ENCODE measurements at regions of chr15 and their contacts with region 1.

Region 1: GRCh38 chr15:72155635-72156616 is 37.7 kb downstream of the SENP8 start:
- DNase-seq: peak; percentile 83
- H3K4me3 ChIP-seq: peak overlapping the region; percentile 35
- H3K27ac ChIP-seq: no peak overlapping the region
- H3K4me1 ChIP-seq: peaks cover 6% of the 10 kb centered on the region
- CTCF ChIP-seq: peak; percentile 98

Region 2: GRCh38 chr15:71743861-71744382 is 412.0 kb before region 1 on chr15:
- CTCF ChIA-PET with region 1: no interaction called
- POLR2A ChIA-PET with region 1: no interaction called
- intact Hi-C with region 1: loop called (anchors 1 kb)
- DNase-seq: peak; percentile 71
- H3K4me3 ChIP-seq: no peak overlapping the region
- H3K27ac ChIP-seq: no peak overlapping the region
- H3K4me1 ChIP-seq: no peaks in the 10 kb centered on the region
- CTCF ChIP-seq: peak; percentile 88

Region 3: DNA sequence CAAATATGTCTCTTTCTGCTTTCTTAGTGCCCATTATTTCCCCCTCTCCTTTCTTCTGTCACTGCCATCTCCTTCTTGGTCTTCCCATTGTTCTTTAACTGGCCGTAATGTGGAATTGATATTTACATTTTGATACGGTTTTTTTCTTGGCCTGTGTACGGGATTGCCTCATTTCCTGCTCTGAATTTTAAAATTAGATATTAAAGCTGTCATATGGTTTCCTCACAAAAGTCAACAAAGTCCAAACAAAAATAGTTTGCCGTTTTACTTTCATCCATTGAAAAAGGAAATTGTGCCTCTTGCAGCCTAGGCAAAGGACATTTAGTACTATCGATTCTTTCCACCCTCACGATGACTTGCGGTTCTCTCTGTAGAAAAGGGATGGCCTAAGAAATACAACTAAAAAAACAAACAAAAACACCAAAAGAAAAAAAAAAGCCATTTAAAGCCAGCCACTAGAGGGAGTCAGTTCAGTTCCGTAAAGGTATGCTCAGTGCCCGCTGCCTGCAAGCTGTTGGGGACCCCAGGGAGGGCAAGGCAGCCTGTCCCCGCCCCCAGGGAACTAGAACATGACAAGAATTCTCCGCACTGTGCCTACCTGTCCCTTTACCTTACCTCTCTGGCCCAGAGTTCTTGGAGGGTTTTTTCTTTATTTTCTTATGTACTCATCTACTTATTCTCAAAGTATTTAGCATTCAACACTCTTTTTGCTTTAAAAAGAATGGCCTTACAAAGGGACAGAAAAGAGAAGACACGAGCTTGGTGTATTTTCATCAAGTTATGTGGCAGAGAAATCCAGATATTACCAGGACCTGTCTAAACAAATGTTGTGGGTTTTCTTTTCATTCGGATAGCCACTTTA is 375.6 kb before region 1 on chr15:
- CTCF ChIA-PET with region 1: interaction called, 3 read pairs
- POLR2A ChIA-PET with region 1: no interaction called
- intact Hi-C with region 1: loop called (anchors 1 kb)
- DNase-seq: peak; percentile 73
- H3K4me3 ChIP-seq: no peak overlapping the region
- H3K27ac ChIP-seq: no peak overlapping the region
- H3K4me1 ChIP-seq: no peaks in the 10 kb centered on the region
- CTCF ChIP-seq: peak; percentile 96

Region 4: DNA sequence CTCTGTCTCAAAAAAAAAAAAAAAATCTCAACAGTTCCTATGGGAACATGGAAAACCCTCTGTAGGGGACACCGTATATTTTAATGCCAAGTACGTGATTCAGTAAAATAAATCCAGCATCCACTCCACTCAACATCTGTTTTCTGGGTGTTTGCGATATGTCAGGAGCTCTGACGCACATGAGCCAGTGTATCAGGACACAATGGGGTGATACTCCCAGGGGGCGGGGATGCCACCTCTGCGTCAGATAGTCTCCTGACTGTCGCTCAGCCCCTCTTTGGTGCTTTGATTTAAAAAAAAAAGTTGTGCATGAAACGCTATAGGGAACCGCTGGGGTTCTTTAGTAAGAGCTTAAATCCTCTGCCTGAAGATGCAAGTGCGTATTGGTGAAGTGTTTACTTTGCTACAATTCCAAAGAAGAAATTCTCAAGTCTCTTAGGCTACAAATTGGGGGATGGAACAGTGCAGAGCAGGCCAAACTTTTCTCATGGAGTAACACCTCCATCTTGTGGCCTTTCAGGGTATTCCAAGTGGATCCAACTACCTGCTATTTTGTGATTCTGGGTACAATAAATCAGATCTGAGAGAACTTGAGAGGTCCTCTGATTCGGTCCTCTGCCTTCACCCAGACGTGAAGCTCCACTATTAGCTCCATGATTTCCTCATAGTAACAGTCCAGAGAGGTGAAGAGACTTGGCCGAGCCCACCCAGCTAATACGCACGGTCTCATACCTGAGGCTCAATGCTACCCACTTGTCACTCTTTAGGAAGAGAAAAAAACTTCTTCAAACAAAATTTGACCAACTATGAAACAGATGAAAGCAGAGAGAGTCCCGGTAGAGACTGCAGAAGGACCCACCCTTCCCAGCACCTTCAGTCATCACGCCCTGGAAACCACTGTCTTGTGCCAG is 354.8 kb before region 1 on chr15:
- CTCF ChIA-PET with region 1: no interaction called
- POLR2A ChIA-PET with region 1: no interaction called
- intact Hi-C with region 1: loop called (anchors 1 kb)
- DNase-seq: peak; percentile 49
- H3K4me3 ChIP-seq: no peak overlapping the region
- H3K27ac ChIP-seq: no peak overlapping the region
- H3K4me1 ChIP-seq: peaks cover 7% of the 10 kb centered on the region
- CTCF ChIP-seq: peak; percentile 85

Region 5: DNA sequence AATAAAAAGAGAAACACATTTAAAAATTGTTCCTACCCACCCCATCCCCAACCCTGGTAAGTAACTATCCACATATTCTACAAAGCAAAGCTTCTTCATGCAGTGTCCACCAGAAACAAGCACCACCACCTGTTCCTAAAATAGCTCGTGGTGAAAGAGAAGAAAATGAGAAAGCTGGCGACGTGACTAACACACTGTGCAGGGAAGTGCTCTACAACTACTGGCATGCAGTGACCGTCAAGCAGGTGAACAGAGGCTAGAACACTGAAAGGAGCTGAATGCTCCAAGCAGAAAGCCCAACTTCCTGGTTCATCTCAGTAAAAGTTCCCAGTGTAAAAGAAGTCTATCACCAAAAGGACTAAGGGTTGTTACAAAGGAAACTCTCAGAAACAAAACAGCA is 264.9 kb before region 1 on chr15:
- CTCF ChIA-PET with region 1: no interaction called
- POLR2A ChIA-PET with region 1: no interaction called
- intact Hi-C with region 1: loop called (anchors 5 kb)
- DNase-seq: peak; percentile 2
- H3K4me3 ChIP-seq: no peak overlapping the region
- H3K27ac ChIP-seq: no peak overlapping the region
- H3K4me1 ChIP-seq: peaks cover 5% of the 10 kb centered on the region
- CTCF ChIP-seq: no peak

Region 6: DNA sequence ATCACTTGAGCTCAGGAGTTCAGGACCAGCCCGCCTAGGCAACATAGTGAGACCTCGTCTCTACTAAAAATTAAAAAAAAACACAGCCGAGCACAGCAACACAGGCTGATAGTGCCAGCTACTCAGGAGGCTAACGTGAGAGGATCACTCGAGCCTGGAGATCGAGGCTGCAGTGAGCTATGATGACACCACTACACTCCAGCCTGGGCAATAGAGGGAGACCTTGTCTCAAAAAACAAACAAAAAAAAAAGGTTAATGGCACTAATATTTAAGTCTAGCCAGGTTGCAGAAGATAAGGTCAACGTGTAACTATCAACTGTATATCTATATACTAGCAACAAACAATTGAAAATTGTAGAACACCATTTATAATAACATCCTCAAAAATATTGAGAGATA is 113.1 kb before region 1 on chr15:
- CTCF ChIA-PET with region 1: interaction called, 3 read pairs
- POLR2A ChIA-PET with region 1: interaction called, 7 read pairs
- intact Hi-C with region 1: loop called (anchors 1 kb)
- DNase-seq: peak; percentile 19
- H3K4me3 ChIP-seq: no peak overlapping the region
- H3K27ac ChIP-seq: no peak overlapping the region
- H3K4me1 ChIP-seq: peaks cover 12% of the 10 kb centered on the region
- CTCF ChIP-seq: peak; percentile 72

Region 7: GRCh38 chr15:72057548-72058091 is 98.3 kb before region 1 on chr15:
- CTCF ChIA-PET with region 1: no interaction called
- POLR2A ChIA-PET with region 1: no interaction called
- intact Hi-C with region 1: no loop called
- DNase-seq: no peak
- H3K4me3 ChIP-seq: peak overlapping the region; percentile 13
- H3K27ac ChIP-seq: no peak overlapping the region
- H3K4me1 ChIP-seq: peaks cover 9% of the 10 kb centered on the region
- CTCF ChIP-seq: no peak

Region 8: DNA sequence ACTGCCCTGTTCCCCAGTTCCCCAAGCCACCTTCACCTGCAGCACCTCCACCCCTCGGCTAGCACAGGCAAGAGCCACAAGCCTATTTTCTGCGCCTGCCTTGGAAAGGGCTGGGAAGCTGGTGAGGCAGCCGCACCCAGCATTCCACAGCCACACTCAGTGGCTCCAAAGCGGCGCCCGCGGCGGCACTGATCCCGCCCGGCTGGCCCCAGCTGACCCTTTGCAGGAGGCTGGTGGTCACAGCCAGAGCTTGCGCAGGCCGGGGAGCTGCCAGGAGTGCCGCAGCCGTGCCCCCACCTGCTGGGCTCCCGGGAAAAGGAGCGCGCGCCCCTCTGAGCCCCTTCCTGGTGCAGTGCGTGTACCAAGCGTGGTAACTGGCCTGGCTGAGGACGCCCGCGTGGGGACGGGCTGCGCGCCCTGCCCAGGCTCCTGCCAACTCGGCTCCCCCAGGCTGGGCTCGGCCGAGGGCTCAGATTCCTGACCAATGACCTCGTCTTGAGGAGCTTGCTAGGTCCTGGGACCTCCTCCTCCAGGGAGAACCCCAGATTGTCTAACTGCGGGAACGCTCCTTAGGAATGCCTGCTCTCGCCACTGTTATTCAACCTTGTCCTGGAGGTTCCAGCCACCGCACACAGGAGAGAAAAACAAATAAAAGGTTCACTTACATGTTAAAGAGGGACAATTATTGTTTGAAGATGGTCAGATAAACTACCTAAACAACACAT is 28.4 kb after region 1 on chr15:
- CTCF ChIA-PET with region 1: no interaction called
- POLR2A ChIA-PET with region 1: no interaction called
- intact Hi-C with region 1: no loop called
- DNase-seq: no peak
- H3K4me3 ChIP-seq: no peak overlapping the region
- H3K27ac ChIP-seq: no peak overlapping the region
- H3K4me1 ChIP-seq: no peaks in the 10 kb centered on the region
- CTCF ChIP-seq: no peak

Region 9: GRCh38 chr15:72353265-72353664 is 197.3 kb after region 1 on chr15:
- CTCF ChIA-PET with region 1: no interaction called
- POLR2A ChIA-PET with region 1: no interaction called
- intact Hi-C with region 1: no loop called
- DNase-seq: no peak
- H3K4me3 ChIP-seq: no peak overlapping the region
- H3K27ac ChIP-seq: no peak overlapping the region
- H3K4me1 ChIP-seq: no peaks in the 10 kb centered on the region
- CTCF ChIP-seq: no peak